Ascending aorta (tissue), 2 donors: ENCODE measurements at regions of chr3 and their contacts with region 1.

Region 1: DNA sequence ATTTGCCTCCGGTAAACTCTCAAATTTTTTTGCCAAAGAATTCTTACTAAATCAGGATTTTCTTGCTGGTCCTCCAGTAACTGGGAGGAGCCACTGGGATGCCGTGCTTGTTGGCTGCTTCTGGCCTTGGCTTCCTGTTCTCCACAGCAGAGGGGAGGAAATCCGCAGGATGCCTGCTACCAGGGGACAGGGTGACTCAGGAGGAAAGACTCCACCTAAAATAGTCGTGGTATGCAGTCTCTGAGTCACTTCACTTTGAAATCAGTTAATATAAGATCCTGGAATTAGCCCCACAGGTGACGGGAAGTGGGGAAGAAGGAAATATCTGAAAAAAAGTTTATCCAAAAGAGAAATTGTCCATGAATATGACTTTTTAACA is 6.5 kb upstream of the TM4SF18 start:
- DNase-seq: peak; percentile 65 to 96
- H3K4me3 ChIP-seq: no peak overlapping the region
- H3K27ac ChIP-seq: peak overlapping the region; percentile 72 to 78
- H3K4me1 ChIP-seq: peaks cover 0 to 17% of the 10 kb centered on the region in 2 donors
- H3K27me3 ChIP-seq: no peaks in the 10 kb centered on the region
- CTCF ChIP-seq: no peak

Region 2: GRCh38 chr3:149299938-149300791 is 39.8 kb before region 1 on chr3:
- intact Hi-C with region 1: loop called (anchors 1 kb)
- DNase-seq: peak in 1 of 2 donors; percentile 78
- H3K4me3 ChIP-seq: no peak overlapping the region
- H3K27ac ChIP-seq: peak overlapping the region; percentile 61 to 78
- H3K4me1 ChIP-seq: peaks cover 12 to 25% of the 10 kb centered on the region in 2 donors
- H3K27me3 ChIP-seq: no peaks in the 10 kb centered on the region
- CTCF ChIP-seq: no peak

Region 3: GRCh38 chr3:149377408-149378377 is 37.8 kb after region 1 on chr3 and contains the start of gene TM4SF1:
- intact Hi-C with region 1: loop called (anchors 2 kb)
- DNase-seq: peak; percentile 30 to 92
- H3K4me3 ChIP-seq: peak within 1 kb of the TSS; percentile 46 to 66
- H3K27ac ChIP-seq: peak within 1 kb of the TSS; percentile 74 to 83
- H3K4me1 ChIP-seq: peaks cover 14 to 40% of the 10 kb centered on the region in 2 donors
- H3K27me3 ChIP-seq: no peaks in the 10 kb centered on the region
- CTCF ChIP-seq: no peak
- total RNA-seq, gene TM4SF1: 487 TPM